HepG2 (cell line): ENCODE measurements at regions of chr7 and their contacts with region 1.

Region 1: DNA sequence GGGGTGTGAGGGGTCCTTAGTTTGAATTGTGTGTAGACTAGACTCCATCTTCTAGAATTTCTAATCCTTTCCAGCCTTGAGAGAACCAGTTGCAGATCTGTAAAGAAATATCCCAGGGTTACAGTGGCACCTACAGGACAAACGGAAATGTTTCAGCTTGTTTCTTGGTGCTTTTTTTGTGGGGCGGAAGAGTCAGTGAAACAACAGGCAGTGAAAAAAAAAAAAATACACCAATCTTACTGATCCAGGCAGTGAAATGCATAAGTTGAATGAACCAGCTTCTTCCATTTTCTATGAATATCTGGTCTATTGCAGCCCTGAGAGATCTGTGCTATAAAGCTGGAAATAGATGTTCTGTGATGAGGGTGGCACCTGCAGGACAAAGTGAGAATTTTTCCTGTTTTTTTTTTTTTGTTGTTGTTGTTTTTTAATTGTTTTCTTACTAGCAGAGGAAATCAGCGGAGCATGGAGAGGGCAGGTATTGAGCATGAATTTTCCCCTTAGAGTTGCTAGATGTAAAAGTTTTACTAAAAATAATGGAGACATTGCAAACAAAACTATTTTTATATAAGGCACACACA is 81.9 kb upstream of the DYNC1I1 start:
- DNase-seq: peak; percentile 47
- ATAC-seq: peak; percentile 83
- H3K4me3 ChIP-seq: no peak overlapping the region
- H3K27ac ChIP-seq: no peak overlapping the region
- H3K4me1 ChIP-seq: no peaks in the 10 kb centered on the region
- H3K27me3 ChIP-seq: no peaks in the 10 kb centered on the region
- CTCF ChIP-seq: peak; percentile 72
- EP300 ChIP-seq: no peak
- POLR2A ChIP-seq: no peak
- RAD21 ChIP-seq: peak; percentile 25; the same call in 1 of the 2 replicates

Region 2: GRCh38 chr7:95330204-95330960 is 360.1 kb before region 1 on chr7:
- CTCF ChIA-PET with region 1: no interaction called
- POLR2A ChIA-PET with region 1: no interaction called
- in situ Hi-C with region 1: loop called (anchors 25 kb)
- intact Hi-C with region 1: no loop called
- DNase-seq: no peak
- ATAC-seq: no peak
- H3K4me3 ChIP-seq: peak overlapping the region; percentile 26 to 58 (median 37); a peak in 5 of 6 replicates
- H3K27ac ChIP-seq: no peak overlapping the region
- H3K4me1 ChIP-seq: 0 out of 2 replicates have a peak, but pooled peaks cover 6% of the 10 kb centered on the region
- H3K27me3 ChIP-seq: no peaks in the 10 kb centered on the region
- CTCF ChIP-seq: no peak
- EP300 ChIP-seq: no peak
- POLR2A ChIP-seq: no peak
- RAD21 ChIP-seq: no peak

Region 3: DNA sequence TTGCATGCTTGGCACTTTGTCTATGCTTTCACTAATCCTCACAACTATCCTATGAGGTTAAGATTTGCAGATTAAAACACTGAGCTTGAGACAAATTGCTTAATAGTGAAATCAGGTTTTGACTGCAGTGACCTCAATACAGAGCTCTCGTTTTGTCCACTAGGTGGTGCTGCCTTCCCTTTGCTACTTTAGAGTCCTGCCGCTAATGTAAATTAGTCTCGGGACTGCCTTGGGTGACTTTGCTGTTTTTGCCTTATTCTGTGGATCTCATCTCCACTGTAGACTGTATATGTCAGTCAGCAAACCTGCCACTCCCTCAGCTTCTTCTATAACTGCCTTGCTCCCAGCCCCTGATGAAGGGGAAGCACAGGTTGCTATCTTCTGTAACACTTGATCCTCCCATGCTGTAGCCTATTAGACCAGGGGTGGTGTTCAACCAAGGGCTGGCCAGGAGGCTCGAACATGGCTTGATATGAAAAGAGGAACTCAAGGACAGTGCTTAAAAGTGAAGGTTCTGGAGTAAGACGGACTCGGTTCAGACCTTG is 178.7 kb before region 1 on chr7:
- CTCF ChIA-PET with region 1: interaction called, 52 read pairs
- POLR2A ChIA-PET with region 1: interaction called, 4 read pairs
- in situ Hi-C with region 1: no loop called
- intact Hi-C with region 1: loop called (anchors 1 kb)
- DNase-seq: peak; percentile 75
- ATAC-seq: peak; percentile 97
- H3K4me3 ChIP-seq: no peak overlapping the region; a peak in 1 of 6 replicates
- H3K27ac ChIP-seq: no peak overlapping the region
- H3K4me1 ChIP-seq: peaks cover 10% of the 10 kb centered on the region; the same call in 1 of the 2 replicates
- H3K27me3 ChIP-seq: no peaks in the 10 kb centered on the region
- CTCF ChIP-seq: peak; percentile 82
- EP300 ChIP-seq: no peak
- POLR2A ChIP-seq: no peak
- RAD21 ChIP-seq: peak; percentile 73

Region 4: GRCh38 chr7:95749044-95749443 is 58.6 kb after region 1 on chr7:
- CTCF ChIA-PET with region 1: no interaction called
- POLR2A ChIA-PET with region 1: no interaction called
- in situ Hi-C with region 1: no loop called
- intact Hi-C with region 1: no loop called
- DNase-seq: no peak
- ATAC-seq: no peak
- H3K4me3 ChIP-seq: no peak overlapping the region
- H3K27ac ChIP-seq: no peak overlapping the region
- H3K4me1 ChIP-seq: no peaks in the 10 kb centered on the region
- H3K27me3 ChIP-seq: no peaks in the 10 kb centered on the region
- CTCF ChIP-seq: no peak
- EP300 ChIP-seq: no peak
- POLR2A ChIP-seq: no peak
- RAD21 ChIP-seq: no peak